ENCODE measurements at regions of chr2 and their contacts with region 1.

Region 1: DNA sequence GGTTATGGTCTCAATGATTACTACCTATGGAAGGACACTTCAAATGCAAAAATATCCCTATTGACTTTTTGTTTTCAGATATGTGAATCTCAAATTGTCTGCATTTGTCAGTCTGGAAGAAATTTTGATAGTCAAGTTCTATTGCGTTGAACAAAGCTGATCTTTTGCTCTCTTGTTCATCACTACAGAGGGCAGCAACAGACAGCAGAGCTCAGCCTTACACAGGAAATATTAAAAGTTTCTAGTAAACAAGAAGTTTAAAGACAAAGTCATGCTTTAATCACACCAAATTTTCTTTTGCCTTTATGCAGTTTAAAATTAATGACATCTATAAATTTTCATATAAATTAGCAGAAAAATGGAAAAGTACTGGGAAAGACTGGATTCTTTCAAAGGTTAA is 617.5 kb downstream of the NR4A2 start:
- DNase-seq: no peak
- ATAC-seq: peak; percentile 88
- H3K4me3 ChIP-seq: no peak overlapping the region
- H3K27ac ChIP-seq: no peak overlapping the region
- H3K4me1 ChIP-seq: no peaks in the 10 kb centered on the region
- H3K27me3 ChIP-seq: no peaks in the 10 kb centered on the region
- CTCF ChIP-seq: no peak

Region 2: GRCh38 chr2:155770516-155770915 is 55.5 kb after region 1 on chr2:
- CTCF ChIA-PET with region 1: no interaction called
- POLR2A ChIA-PET with region 1: no interaction called
- intact Hi-C with region 1: no loop called
- DNase-seq: no peak
- ATAC-seq: no peak
- H3K4me3 ChIP-seq: no peak overlapping the region
- H3K27ac ChIP-seq: no peak overlapping the region
- H3K4me1 ChIP-seq: no peaks in the 10 kb centered on the region
- H3K27me3 ChIP-seq: no peaks in the 10 kb centered on the region
- CTCF ChIP-seq: no peak

Region 3: DNA sequence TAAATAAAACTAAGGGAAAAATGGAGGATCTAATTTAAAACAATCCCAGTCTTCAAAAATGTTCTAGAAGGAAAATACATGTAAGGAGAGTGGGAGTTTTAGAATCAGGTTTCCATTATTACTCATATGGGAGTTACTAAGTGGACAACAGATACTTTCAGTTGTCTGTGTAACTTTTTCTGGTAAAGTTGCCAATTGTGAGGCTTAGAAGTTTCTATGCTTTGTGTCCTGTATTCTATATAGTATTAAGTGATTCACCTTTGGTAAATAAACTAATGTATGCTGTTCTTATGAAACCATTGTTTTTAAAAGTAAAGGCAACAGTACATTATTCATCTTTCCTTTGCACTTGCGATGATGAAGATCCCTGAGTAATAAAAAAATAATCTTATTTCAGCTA is 342.7 kb after region 1 on chr2:
- CTCF ChIA-PET with region 1: no interaction called
- POLR2A ChIA-PET with region 1: no interaction called
- intact Hi-C with region 1: loop called (anchors 10 kb)
- DNase-seq: peak; percentile 93
- ATAC-seq: peak; percentile 93
- H3K4me3 ChIP-seq: peak overlapping the region; percentile 33; the same call in 1 of the 2 replicates
- H3K27ac ChIP-seq: peak overlapping the region; percentile 98
- H3K4me1 ChIP-seq: peaks cover 25% of the 10 kb centered on the region
- H3K27me3 ChIP-seq: no peaks in the 10 kb centered on the region
- CTCF ChIP-seq: no peak

Region 4: DNA sequence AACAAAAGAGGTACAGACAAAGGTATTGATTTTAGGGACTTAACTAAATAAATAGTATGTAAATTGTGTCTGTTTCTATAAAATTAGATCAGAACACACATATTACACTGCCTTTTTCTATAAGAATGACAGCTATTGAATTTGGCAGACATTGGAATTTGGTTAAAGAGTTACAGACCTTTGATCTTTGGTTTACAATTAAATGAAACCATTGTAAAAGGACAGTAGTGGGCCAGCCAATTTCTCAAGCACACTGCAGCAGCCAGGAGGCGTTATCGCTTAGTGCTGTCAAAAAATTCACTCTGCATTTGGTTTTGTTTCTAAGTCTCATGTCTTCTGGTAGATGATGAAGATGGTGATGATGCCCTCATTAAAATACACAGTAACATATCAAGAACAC is 441.6 kb after region 1 on chr2:
- CTCF ChIA-PET with region 1: no interaction called
- POLR2A ChIA-PET with region 1: no interaction called
- intact Hi-C with region 1: loop called (anchors 5 kb)
- DNase-seq: no peak
- ATAC-seq: no peak
- H3K4me3 ChIP-seq: no peak overlapping the region
- H3K27ac ChIP-seq: no peak overlapping the region
- H3K4me1 ChIP-seq: no peaks in the 10 kb centered on the region
- H3K27me3 ChIP-seq: no peaks in the 10 kb centered on the region
- CTCF ChIP-seq: peak; percentile 47

Region 5: GRCh38 chr2:156955701-156956100 is 1240.7 kb after region 1 on chr2:
- CTCF ChIA-PET with region 1: no interaction called
- POLR2A ChIA-PET with region 1: no interaction called
- intact Hi-C with region 1: no loop called
- DNase-seq: peak; percentile 5
- ATAC-seq: no peak
- H3K4me3 ChIP-seq: no peak overlapping the region
- H3K27ac ChIP-seq: no peak overlapping the region
- H3K4me1 ChIP-seq: no peaks in the 10 kb centered on the region
- H3K27me3 ChIP-seq: no peaks in the 10 kb centered on the region
- CTCF ChIP-seq: no peak